PC-9 (cell line): ENCODE measurements at regions of chr14 and their contacts with region 1.

Region 1: GRCh38 chr14:63727774-63728728 is at the start of gene SGPP1:
- DNase-seq: peak; percentile 83
- H3K4me3 ChIP-seq: peak within 1 kb of the TSS; percentile 83
- H3K27ac ChIP-seq: peak within 1 kb of the TSS; percentile 43
- H3K4me1 ChIP-seq: peaks cover 28% of the 10 kb centered on the region
- H3K27me3 ChIP-seq: no peaks in the 10 kb centered on the region
- CTCF ChIP-seq: no peak; the same call in 1 of the 2 replicates
- total RNA-seq, gene SGPP1: 20.6 and 26.7 TPM in 2 replicates

Region 2: GRCh38 chr14:63543000-63543825 is 184.8 kb before region 1 on chr14 and contains the start of gene PPP2R5E:
- CTCF ChIA-PET with region 1: no interaction called
- POLR2A ChIA-PET with region 1: no interaction called
- intact Hi-C with region 1: loop called (anchors 1 kb)
- DNase-seq: peak; percentile 97 to 99
- H3K4me3 ChIP-seq: peak within 1 kb of the TSS; percentile 82
- H3K27ac ChIP-seq: peak within 1 kb of the TSS; percentile 22
- H3K4me1 ChIP-seq: peaks cover 22% of the 10 kb centered on the region
- H3K27me3 ChIP-seq: no peaks in the 10 kb centered on the region
- CTCF ChIP-seq: no peak
- total RNA-seq, gene PPP2R5E: 66.4 and 67.0 TPM in 2 replicates

Region 3: DNA sequence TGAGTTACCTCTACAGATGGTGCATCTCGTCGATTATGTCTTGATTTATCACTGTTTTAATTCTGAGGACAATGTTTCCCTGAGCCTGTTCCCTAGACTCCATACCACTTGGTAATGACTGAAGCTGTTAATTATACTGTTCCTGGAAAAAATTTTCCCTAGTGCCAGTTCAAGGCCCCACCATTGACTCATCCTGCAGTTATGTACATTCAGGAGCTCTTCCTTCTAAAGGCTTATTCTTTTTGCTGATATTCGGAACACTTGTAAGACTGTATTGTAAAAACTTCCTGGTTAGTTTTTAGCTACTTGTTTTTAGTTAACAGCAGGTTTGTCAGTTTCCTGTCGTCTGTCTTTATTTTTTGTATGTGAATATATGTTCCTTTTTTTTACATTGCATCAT is 154.5 kb before region 1 on chr14:
- CTCF ChIA-PET with region 1: no interaction called
- POLR2A ChIA-PET with region 1: interaction called, 16 read pairs
- intact Hi-C with region 1: no loop called
- DNase-seq: peak in 1 of 2 experiments; percentile 65
- H3K4me3 ChIP-seq: no peak overlapping the region
- H3K27ac ChIP-seq: no peak overlapping the region
- H3K4me1 ChIP-seq: no peaks in the 10 kb centered on the region; the same call in 1 of the 2 replicates
- H3K27me3 ChIP-seq: no peaks in the 10 kb centered on the region
- CTCF ChIP-seq: no peak

Region 4: GRCh38 chr14:63677821-63678380 is 50.1 kb before region 1 on chr14:
- CTCF ChIA-PET with region 1: no interaction called
- POLR2A ChIA-PET with region 1: no interaction called
- intact Hi-C with region 1: loop called (anchors 5 kb)
- DNase-seq: peak; percentile 51 to 97
- H3K4me3 ChIP-seq: no peak overlapping the region
- H3K27ac ChIP-seq: peak overlapping the region; percentile 29
- H3K4me1 ChIP-seq: peaks cover 26% of the 10 kb centered on the region
- H3K27me3 ChIP-seq: no peaks in the 10 kb centered on the region
- CTCF ChIP-seq: no peak

Region 5: DNA sequence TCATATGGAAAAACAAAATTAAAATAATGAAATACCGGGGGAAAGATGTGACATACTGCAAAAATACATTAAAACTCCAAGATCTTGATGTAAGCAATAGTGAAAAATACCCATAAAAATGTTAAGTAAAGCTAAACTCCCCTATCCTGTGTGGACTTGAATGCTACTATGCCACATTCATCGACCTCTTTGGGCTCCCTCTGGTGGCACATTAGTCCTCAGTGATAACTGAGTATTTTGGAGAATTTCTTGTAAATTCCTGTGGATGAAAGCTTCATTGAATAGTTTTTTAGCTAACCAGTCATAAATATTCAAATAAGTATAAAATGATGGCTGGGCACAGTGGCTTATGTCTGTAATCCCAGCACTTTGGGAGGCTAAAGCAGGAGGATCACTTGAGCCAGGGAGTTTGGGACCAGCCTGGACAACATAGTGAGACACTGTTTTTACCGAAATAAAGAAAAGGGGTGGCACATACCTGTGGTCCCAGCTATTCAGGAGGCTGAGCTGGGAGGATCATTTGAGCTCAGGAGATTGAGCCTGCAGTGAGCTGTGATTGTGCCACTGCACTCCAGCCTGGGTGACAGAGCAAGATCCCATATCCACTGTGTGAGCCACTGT is 42.2 kb after region 1 on chr14:
- CTCF ChIA-PET with region 1: no interaction called
- POLR2A ChIA-PET with region 1: no interaction called
- intact Hi-C with region 1: loop called (anchors 1 kb)
- DNase-seq: peak; percentile 36 to 50
- H3K4me3 ChIP-seq: no peak overlapping the region
- H3K27ac ChIP-seq: no peak overlapping the region
- H3K4me1 ChIP-seq: no peaks in the 10 kb centered on the region
- H3K27me3 ChIP-seq: no peaks in the 10 kb centered on the region
- CTCF ChIP-seq: peak; percentile 84

Region 6: DNA sequence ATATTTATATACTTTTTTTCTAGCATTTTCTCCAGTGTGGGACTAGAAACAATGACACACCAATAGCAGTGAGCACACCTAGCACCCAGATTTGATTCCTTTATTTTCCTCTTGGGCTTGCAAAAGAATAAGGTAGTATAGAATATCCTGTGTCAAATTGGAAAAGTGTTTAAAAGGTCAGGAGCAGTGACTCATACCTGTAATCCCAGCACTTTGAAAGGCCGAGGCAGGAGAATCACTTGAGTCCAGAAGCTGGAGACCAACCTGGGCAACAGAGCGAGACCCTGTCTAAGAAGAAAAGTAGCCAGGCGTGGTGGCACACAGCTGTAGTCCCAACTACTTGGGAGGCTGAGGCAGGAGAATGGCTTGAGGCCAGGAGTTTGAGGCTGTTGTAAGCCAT is 53.6 kb after region 1 on chr14:
- CTCF ChIA-PET with region 1: no interaction called
- POLR2A ChIA-PET with region 1: no interaction called
- intact Hi-C with region 1: no loop called
- DNase-seq: peak; percentile 18 to 63
- H3K4me3 ChIP-seq: no peak overlapping the region
- H3K27ac ChIP-seq: no peak overlapping the region
- H3K4me1 ChIP-seq: peaks cover 19% of the 10 kb centered on the region
- H3K27me3 ChIP-seq: no peaks in the 10 kb centered on the region
- CTCF ChIP-seq: no peak

Region 7: DNA sequence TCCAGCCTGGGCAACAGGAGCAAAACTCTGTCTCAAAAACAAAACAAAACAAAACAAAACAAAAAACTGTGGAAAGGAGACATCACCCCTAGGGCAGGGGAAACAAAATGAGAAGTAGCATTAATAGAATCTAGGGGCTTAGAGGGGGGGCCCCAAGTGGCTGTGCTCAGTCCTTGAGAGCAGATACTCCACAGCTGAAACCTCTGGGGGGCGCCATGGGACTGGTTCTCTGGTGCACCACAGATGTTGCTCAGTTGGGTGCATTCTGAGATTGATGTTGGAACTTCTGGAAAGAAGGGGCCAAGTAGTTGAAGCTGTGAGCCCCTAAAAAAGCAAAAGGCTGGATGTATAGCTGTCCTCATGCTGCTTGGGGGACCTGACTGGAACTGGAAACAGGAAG is 112.9 kb after region 1 on chr14:
- CTCF ChIA-PET with region 1: no interaction called
- POLR2A ChIA-PET with region 1: no interaction called
- intact Hi-C with region 1: no loop called
- DNase-seq: no peak
- H3K4me3 ChIP-seq: no peak overlapping the region
- H3K27ac ChIP-seq: no peak overlapping the region
- H3K4me1 ChIP-seq: no peaks in the 10 kb centered on the region
- H3K27me3 ChIP-seq: no peaks in the 10 kb centered on the region
- CTCF ChIP-seq: peak; percentile 32; the same call in 1 of the 2 replicates